Activated naive CD4-positive, alpha-beta T cell treated with anti-CD3 and anti-CD28 coated beads for 36 hours (primary cell): ENCODE measurements at regions of chr21 and their contacts with region 1.

Region 1: GRCh38 chr21:44927587-44928461 is 7.1 kb upstream of the ITGB2 start:
- DNase-seq: peak; percentile 97
- H3K4me3 Mint-ChIP-seq: peak overlapping the region; percentile 80
- H3K27ac Mint-ChIP-seq: peak overlapping the region; percentile 99
- H3K4me1 Mint-ChIP-seq: peaks cover 76% of the 10 kb centered on the region
- H3K27me3 Mint-ChIP-seq: no peaks in the 10 kb centered on the region

Region 2: GRCh38 chr21:44353191-44353970 is 574.4 kb before region 1 on chr21 and contains the start of gene TRPM2:
- CTCF ChIA-PET with region 1: no interaction called
- intact Hi-C with region 1: loop called (anchors 10 kb)
- DNase-seq: peak; percentile 48
- H3K4me3 Mint-ChIP-seq: peak within 1 kb of the TSS; percentile 40
- H3K27ac Mint-ChIP-seq: peak within 1 kb of the TSS; percentile 44
- H3K4me1 Mint-ChIP-seq: peaks cover 49% of the 10 kb centered on the region
- H3K27me3 Mint-ChIP-seq: peaks cover 4% of the 10 kb centered on the region
- total RNA-seq, gene TRPM2: 2.5 to 3.5 TPM

Region 3: GRCh38 chr21:44801468-44802395 is 126.1 kb before region 1 on chr21 and contains the start of gene UBE2G2:
- CTCF ChIA-PET with region 1: interaction called, 10 read pairs
- intact Hi-C with region 1: loop called (anchors 2 kb)
- DNase-seq: peak; percentile 83
- H3K4me3 Mint-ChIP-seq: peak within 1 kb of the TSS; percentile 98
- H3K27ac Mint-ChIP-seq: peak within 1 kb of the TSS; percentile 83
- H3K4me1 Mint-ChIP-seq: peaks cover 58% of the 10 kb centered on the region
- H3K27me3 Mint-ChIP-seq: no peaks in the 10 kb centered on the region
- total RNA-seq, gene UBE2G2: 94.0 to 95.2 TPM

Region 4: GRCh38 chr21:44873356-44874239 is 54.2 kb before region 1 on chr21 and contains the start of gene PTTG1IP:
- CTCF ChIA-PET with region 1: interaction called, 4 read pairs
- intact Hi-C with region 1: loop called (anchors 2 kb)
- DNase-seq: peak; percentile 99
- H3K4me3 Mint-ChIP-seq: peak within 1 kb of the TSS; percentile 91
- H3K27ac Mint-ChIP-seq: peak within 1 kb of the TSS; percentile 82
- H3K4me1 Mint-ChIP-seq: peaks cover 43% of the 10 kb centered on the region
- H3K27me3 Mint-ChIP-seq: no peaks in the 10 kb centered on the region
- total RNA-seq, gene PTTG1IP: 37.6 to 38.5 TPM

Region 5: GRCh38 chr21:44911389-44912157 is 16.3 kb before region 1 on chr21:
- CTCF ChIA-PET with region 1: interaction called, 14 read pairs
- intact Hi-C with region 1: loop called (anchors 1 kb)
- DNase-seq: peak; percentile 70
- H3K4me3 Mint-ChIP-seq: peak overlapping the region; percentile 57
- H3K27ac Mint-ChIP-seq: peak overlapping the region; percentile 93
- H3K4me1 Mint-ChIP-seq: peaks cover 78% of the 10 kb centered on the region
- H3K27me3 Mint-ChIP-seq: no peaks in the 10 kb centered on the region

Region 6: GRCh38 chr21:44989537-44989886 is 61.7 kb after region 1 on chr21:
- CTCF ChIA-PET with region 1: no interaction called
- intact Hi-C with region 1: no loop called
- DNase-seq: no peak
- H3K4me3 Mint-ChIP-seq: no peak overlapping the region
- H3K27ac Mint-ChIP-seq: no peak overlapping the region
- H3K4me1 Mint-ChIP-seq: no peaks in the 10 kb centered on the region
- H3K27me3 Mint-ChIP-seq: no peaks in the 10 kb centered on the region